BJ (cell line): ENCODE measurements at regions of chr15 and their contacts with region 1.

Region 1: DNA sequence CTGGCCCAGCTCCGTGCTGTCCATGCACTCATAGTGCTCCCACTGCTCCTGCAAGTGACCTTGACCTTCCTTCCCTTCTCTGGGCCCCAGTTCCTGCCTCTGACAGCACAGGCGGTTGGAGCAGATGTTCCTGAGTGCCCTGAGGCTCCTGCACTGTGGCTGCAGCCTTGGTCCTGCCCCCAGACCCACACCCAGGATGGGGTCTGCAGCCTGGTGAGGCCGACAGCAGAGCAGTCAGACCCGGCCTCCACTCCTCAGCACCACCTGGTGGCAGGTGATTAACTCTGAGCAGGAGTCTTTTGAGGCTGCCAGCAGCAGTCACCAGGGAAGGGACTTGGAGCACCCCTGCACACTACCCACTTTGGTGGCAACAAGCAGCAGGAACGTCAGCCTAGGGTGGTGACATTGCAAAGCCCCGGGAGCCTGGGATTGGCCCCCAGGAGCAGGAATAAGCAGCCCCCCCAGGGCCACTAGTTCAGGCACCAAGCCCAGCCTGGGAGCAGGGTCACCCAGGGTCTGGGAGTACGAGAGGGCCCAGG is 64.6 kb downstream of the CYP11A1 start:
- DNase-seq: no peak
- H3K4me3 ChIP-seq: no peak overlapping the region
- H3K27me3 ChIP-seq: peaks cover 29% of the 10 kb centered on the region
- CTCF ChIP-seq: peak; percentile 72

Region 2: GRCh38 chr15:74127260-74127953 is 175.5 kb before region 1 on chr15:
- CTCF ChIA-PET with region 1: interaction called, 68 read pairs
- POLR2A ChIA-PET with region 1: interaction called, 4 read pairs
- DNase-seq: no peak
- H3K4me3 ChIP-seq: peak overlapping the region; percentile 34
- H3K27me3 ChIP-seq: peaks cover 56% of the 10 kb centered on the region
- CTCF ChIP-seq: peak; percentile 100

Region 3: GRCh38 chr15:74270854-74271520 is 31.9 kb before region 1 on chr15:
- CTCF ChIA-PET with region 1: no interaction called
- POLR2A ChIA-PET with region 1: no interaction called
- DNase-seq: no peak
- H3K4me3 ChIP-seq: no peak overlapping the region
- H3K27me3 ChIP-seq: peaks cover 7% of the 10 kb centered on the region
- CTCF ChIP-seq: no peak

Region 4: GRCh38 chr15:74540761-74541493 is 238.0 kb after region 1 on chr15 and contains the start of gene ARID3B:
- CTCF ChIA-PET with region 1: no interaction called
- POLR2A ChIA-PET with region 1: no interaction called
- DNase-seq: peak; percentile 82
- H3K4me3 ChIP-seq: peak within 1 kb of the TSS; percentile 96
- H3K27me3 ChIP-seq: 0 out of 2 replicates have a peak, but pooled peaks cover 2% of the 10 kb centered on the region
- CTCF ChIP-seq: no peak
- polyA plus RNA-seq, gene ARID3B: 1.2 and 1.5 TPM in 2 replicates